ENCODE measurements at regions of chr3 and their contacts with region 1.

Region 1: GRCh38 chr3:196477678-196478077 is 25.9 kb downstream of the RNF168 start:
- DNase-seq: no peak
- ATAC-seq: no peak
- H3K4me3 ChIP-seq: no peak overlapping the region
- H3K4me3 Mint-ChIP-seq: no peak overlapping the region
- H3K27ac ChIP-seq: no peak overlapping the region
- H3K27ac Mint-ChIP-seq: no peak overlapping the region
- H3K4me1 ChIP-seq: no peaks in the 10 kb centered on the region
- H3K4me1 Mint-ChIP-seq: no peaks in the 10 kb centered on the region
- H3K27me3 ChIP-seq: no peaks in the 10 kb centered on the region
- H3K27me3 Mint-ChIP-seq: no peaks in the 10 kb centered on the region
- CTCF ChIP-seq: no peak

Region 2: DNA sequence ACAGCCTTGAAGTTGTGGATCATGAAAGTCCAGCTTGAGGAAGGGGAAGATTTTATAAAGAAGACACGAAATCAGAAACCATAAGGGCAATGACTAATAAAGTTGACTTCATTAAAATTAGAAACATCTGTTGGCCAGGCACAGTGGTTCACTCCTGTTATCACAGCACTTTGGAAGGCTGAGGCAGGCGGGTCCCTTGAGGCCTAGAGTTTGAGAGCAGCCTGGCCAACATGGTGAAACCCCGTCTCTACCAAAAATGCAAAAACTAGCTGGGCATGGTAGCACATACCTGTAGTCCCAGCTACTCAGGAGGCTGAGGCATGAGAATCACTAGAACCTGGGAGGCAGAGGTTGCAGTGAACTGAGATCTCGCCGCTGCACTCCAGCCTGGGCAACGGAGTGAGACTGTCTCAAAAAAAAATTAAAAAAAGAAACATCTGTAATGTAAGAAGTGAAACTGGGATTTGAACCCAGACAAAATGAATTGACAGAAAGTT is 37.6 kb before region 1 on chr3:
- CTCF ChIA-PET with region 1: no interaction called
- POLR2A ChIA-PET with region 1: no interaction called
- intact Hi-C with region 1: loop called in 1 of 2 experiments (anchors 2 kb)
- DNase-seq: no peak
- ATAC-seq: no peak
- H3K4me3 ChIP-seq: no peak overlapping the region
- H3K4me3 Mint-ChIP-seq: no peak overlapping the region
- H3K27ac ChIP-seq: no peak overlapping the region
- H3K27ac Mint-ChIP-seq: peak overlapping the region; percentile 57
- H3K4me1 ChIP-seq: no peaks in the 10 kb centered on the region
- H3K4me1 Mint-ChIP-seq: no peaks in the 10 kb centered on the region
- H3K27me3 ChIP-seq: no peaks in the 10 kb centered on the region
- H3K27me3 Mint-ChIP-seq: no peaks in the 10 kb centered on the region
- CTCF ChIP-seq: no peak

Region 3: GRCh38 chr3:196496183-196496582 is 18.5 kb after region 1 on chr3:
- CTCF ChIA-PET with region 1: no interaction called
- POLR2A ChIA-PET with region 1: no interaction called
- intact Hi-C with region 1: no loop called
- DNase-seq: no peak
- ATAC-seq: no peak
- H3K4me3 ChIP-seq: no peak overlapping the region
- H3K4me3 Mint-ChIP-seq: no peak overlapping the region
- H3K27ac ChIP-seq: no peak overlapping the region
- H3K27ac Mint-ChIP-seq: peak overlapping the region; percentile 37
- H3K4me1 ChIP-seq: peaks cover 13% of the 10 kb centered on the region
- H3K4me1 Mint-ChIP-seq: peaks cover 57% of the 10 kb centered on the region
- H3K27me3 ChIP-seq: no peaks in the 10 kb centered on the region
- H3K27me3 Mint-ChIP-seq: no peaks in the 10 kb centered on the region
- CTCF ChIP-seq: no peak

Region 4: GRCh38 chr3:196513697-196514349 is 36.1 kb after region 1 on chr3:
- CTCF ChIA-PET with region 1: no interaction called
- POLR2A ChIA-PET with region 1: no interaction called
- intact Hi-C with region 1: no loop called
- DNase-seq: no peak
- ATAC-seq: no peak
- H3K4me3 ChIP-seq: no peak overlapping the region
- H3K4me3 Mint-ChIP-seq: no peak overlapping the region
- H3K27ac ChIP-seq: no peak overlapping the region
- H3K27ac Mint-ChIP-seq: no peak overlapping the region
- H3K4me1 ChIP-seq: no peaks in the 10 kb centered on the region
- H3K4me1 Mint-ChIP-seq: no peaks in the 10 kb centered on the region
- H3K27me3 ChIP-seq: no peaks in the 10 kb centered on the region
- H3K27me3 Mint-ChIP-seq: peaks cover 4% of the 10 kb centered on the region
- CTCF ChIP-seq: no peak